ENCODE measurements at regions of chr4 and their contacts with region 1.

Region 1: DNA sequence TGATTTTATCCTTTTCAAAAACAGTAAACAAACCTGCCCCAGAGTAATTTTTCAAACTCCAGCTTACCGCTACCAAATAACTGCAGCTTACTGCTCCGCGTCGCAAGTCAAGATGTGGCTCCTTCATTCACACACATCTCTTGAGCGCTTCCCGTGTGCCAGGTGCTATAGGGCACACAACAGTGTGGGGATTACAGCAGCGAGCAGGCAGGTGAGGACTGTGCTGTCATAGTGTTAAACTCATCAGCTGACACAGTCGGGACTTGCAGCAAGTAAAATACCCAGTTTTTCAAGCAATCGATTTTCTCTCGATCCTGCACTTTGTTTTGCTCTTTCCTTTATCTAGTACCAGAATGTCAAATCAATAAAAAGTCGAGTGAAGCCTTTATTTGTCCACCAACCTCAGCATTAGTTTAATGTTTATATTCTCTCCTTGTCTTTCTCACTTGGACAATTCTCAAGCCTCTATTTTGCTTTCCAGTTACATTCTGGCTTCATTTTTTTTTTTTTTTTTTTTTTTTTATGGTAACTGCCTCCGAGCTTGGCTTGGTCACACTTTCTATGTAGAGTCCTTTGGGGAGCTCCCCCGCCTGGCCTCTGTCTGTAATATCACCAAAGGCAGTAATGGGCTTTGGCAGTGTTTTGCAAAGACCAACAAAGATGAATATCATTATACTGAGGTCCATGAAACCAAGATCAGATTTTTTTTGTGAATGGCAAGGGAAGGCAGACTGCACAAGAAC is 8.3 kb upstream of the ASB5 start:
- DNase-seq: peak; percentile 30
- H3K4me3 Mint-ChIP-seq: no peak overlapping the region
- H3K27ac Mint-ChIP-seq: no peak overlapping the region
- H3K4me1 Mint-ChIP-seq: no peaks in the 10 kb centered on the region
- H3K27me3 Mint-ChIP-seq: peaks cover 16% of the 10 kb centered on the region

Region 2: GRCh38 chr4:175947117-175947722 is 330.1 kb before region 1 on chr4:
- CTCF ChIA-PET with region 1: no interaction called
- POLR2A ChIA-PET with region 1: no interaction called
- intact Hi-C with region 1: loop called (anchors 2 kb)
- DNase-seq: no peak
- H3K4me3 Mint-ChIP-seq: no peak overlapping the region
- H3K27ac Mint-ChIP-seq: no peak overlapping the region
- H3K4me1 Mint-ChIP-seq: peaks cover 6% of the 10 kb centered on the region
- H3K27me3 Mint-ChIP-seq: peaks cover 3% of the 10 kb centered on the region

Region 3: DNA sequence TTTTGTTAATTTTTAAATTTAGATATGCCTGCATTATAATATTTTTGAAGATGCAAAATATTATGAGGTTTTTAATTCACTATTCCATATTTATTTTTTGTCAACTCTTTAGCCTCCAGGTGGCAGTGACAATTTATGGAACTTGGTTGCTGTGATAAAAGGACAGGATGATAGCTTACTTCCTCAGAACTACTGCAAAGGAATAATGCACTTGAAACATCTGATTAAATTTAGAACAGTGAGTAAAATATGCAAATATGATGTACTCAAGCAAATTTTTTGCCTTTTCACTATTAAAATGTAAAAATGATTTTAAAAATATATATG is 127.0 kb before region 1 on chr4:
- CTCF ChIA-PET with region 1: interaction called, 4 read pairs
- POLR2A ChIA-PET with region 1: no interaction called
- intact Hi-C with region 1: loop called (anchors 1 kb)
- DNase-seq: no peak
- H3K4me3 Mint-ChIP-seq: no peak overlapping the region
- H3K27ac Mint-ChIP-seq: no peak overlapping the region
- H3K4me1 Mint-ChIP-seq: no peaks in the 10 kb centered on the region
- H3K27me3 Mint-ChIP-seq: no peaks in the 10 kb centered on the region

Region 4: GRCh38 chr4:176262243-176262642 is 15.1 kb before region 1 on chr4:
- CTCF ChIA-PET with region 1: no interaction called
- POLR2A ChIA-PET with region 1: no interaction called
- intact Hi-C with region 1: no loop called
- DNase-seq: no peak
- H3K4me3 Mint-ChIP-seq: no peak overlapping the region
- H3K27ac Mint-ChIP-seq: no peak overlapping the region
- H3K4me1 Mint-ChIP-seq: no peaks in the 10 kb centered on the region
- H3K27me3 Mint-ChIP-seq: no peaks in the 10 kb centered on the region